SK-N-SH (cell line): ENCODE measurements at regions of chr13 and their contacts with region 1.

Region 1: DNA sequence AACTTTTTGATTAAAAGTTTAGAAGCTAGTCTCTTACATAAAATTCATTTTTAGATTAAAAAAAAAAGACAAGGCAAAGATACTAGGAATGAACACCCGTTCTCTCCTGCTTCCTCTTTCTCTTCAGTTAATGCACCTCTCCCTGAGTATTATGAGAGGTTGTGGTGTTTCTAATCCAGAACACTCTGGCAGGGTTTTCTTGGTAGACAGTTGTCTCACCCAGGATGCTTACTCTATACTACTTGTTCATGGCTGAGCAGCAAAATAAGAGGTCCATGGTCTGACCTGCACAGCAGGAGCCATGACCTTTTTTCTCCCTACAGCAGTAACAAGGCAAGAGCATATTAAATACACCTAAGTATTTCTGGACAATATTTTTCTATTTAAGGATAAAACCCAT is 62.0 kb downstream of the MICU2 start:
- DNase-seq: no peak
- H3K4me3 ChIP-seq: no peak overlapping the region
- H3K27ac ChIP-seq: no peak overlapping the region
- H3K4me1 ChIP-seq: no peaks in the 10 kb centered on the region; a peak in 1 of 4 replicates
- H3K27me3 ChIP-seq: no peaks in the 10 kb centered on the region
- CTCF ChIP-seq: no peak
- EP300 ChIP-seq: no peak
- RAD21 ChIP-seq: no peak

Region 2: DNA sequence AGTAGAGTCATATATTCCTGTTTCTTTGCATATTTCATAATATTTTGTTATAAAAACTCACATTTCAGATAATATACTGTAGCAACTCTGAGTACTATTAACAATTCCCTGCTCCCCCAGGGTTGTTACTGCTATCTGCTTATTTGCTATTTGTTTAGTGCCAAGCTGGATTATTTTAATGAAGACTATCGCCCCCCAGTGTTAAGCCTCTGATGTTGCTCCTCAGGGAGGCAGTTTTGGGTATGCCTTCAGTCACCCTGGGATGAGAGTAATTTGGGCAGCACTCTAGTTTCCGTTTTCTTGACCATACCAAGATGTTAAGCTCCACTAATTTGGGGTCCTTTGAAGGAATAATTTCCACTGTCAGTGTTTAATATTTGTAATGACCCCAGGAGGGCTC is 16.0 kb after region 1 on chr13:
- CTCF ChIA-PET with region 1: interaction called, 10 read pairs
- POLR2A ChIA-PET with region 1: no interaction called
- DNase-seq: peak; percentile 9
- H3K4me3 ChIP-seq: no peak overlapping the region; a peak in 1 of 4 replicates
- H3K27ac ChIP-seq: no peak overlapping the region
- H3K4me1 ChIP-seq: no peaks in the 10 kb centered on the region
- H3K27me3 ChIP-seq: no peaks in the 10 kb centered on the region
- CTCF ChIP-seq: peak; percentile 51
- EP300 ChIP-seq: no peak
- RAD21 ChIP-seq: peak; percentile 43

Region 3: DNA sequence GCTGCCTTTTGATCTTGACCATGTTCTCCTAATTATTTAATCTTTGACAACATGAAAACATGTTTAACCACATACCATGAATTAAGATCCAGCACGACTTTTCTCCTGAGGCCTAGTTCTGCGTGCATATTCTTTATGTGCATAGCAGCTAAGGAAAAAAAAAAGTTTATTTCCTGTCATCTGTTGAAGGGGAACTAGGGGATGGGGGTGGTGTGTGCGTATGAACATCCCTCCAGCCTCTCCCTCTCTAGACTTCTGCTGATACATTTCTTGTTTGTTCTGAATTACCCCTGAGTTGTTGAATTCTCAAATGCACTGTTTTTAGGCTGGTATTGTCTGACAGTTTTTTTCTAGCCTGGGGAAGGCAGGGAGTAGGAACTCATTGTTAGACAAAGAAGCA is 672.2 kb after region 1 on chr13:
- CTCF ChIA-PET with region 1: no interaction called
- POLR2A ChIA-PET with region 1: no interaction called
- DNase-seq: no peak
- H3K4me3 ChIP-seq: no peak overlapping the region
- H3K27ac ChIP-seq: no peak overlapping the region
- H3K4me1 ChIP-seq: no peaks in the 10 kb centered on the region
- H3K27me3 ChIP-seq: no peaks in the 10 kb centered on the region; the same call in 1 of the 2 replicates
- CTCF ChIP-seq: no peak
- EP300 ChIP-seq: no peak
- RAD21 ChIP-seq: no peak